WTC11 (cell line): ENCODE measurements at regions of chr4 and their contacts with region 1.

Region 1: GRCh38 chr4:1105662-1106061 is 7.7 kb downstream of the RNF212 start:
- DNase-seq: no peak
- ATAC-seq: no peak
- H3K4me3 Mint-ChIP-seq: no peak overlapping the region
- H3K27ac Mint-ChIP-seq: no peak overlapping the region
- H3K4me1 Mint-ChIP-seq: 0 out of 2 replicates have a peak, but pooled peaks cover 9% of the 10 kb centered on the region
- H3K27me3 Mint-ChIP-seq: peaks cover 2% of the 10 kb centered on the region; the same call in 1 of the 2 replicates
- CTCF ChIP-seq: no peak

Region 2: GRCh38 chr4:1092026-1092982 is 13.4 kb before region 1 on chr4:
- CTCF ChIA-PET with region 1: interaction called, 11 read pairs
- POLR2A ChIA-PET with region 1: no interaction called
- DNase-seq: peak; percentile 67
- ATAC-seq: peak; percentile 98
- H3K4me3 Mint-ChIP-seq: no peak overlapping the region
- H3K27ac Mint-ChIP-seq: no peak overlapping the region
- H3K4me1 Mint-ChIP-seq: no peaks in the 10 kb centered on the region
- H3K27me3 Mint-ChIP-seq: peaks cover 13% of the 10 kb centered on the region
- CTCF ChIP-seq: peak; percentile 22; the same call in 1 of the 2 replicates

Region 3: DNA sequence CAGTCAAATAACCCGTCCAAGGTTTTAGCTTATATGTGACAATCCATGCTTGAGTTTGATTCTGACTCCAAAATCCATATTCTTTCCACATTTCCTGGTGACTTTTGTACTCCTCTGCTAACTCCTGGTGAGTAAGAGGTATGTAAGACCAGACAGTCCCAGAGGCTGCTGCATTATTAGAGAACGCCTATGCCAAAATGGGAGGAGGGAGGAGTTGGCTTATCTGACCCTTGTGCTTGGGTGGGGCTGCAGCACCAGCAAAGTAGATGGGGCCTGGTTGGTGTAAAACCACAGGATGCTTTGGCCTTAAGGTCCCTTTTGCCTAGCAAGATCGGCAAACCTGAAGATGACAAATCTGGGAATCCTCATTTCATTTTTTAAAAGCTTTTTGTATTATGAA is 16.8 kb after region 1 on chr4:
- CTCF ChIA-PET with region 1: no interaction called
- POLR2A ChIA-PET with region 1: no interaction called
- DNase-seq: no peak
- ATAC-seq: no peak
- H3K4me3 Mint-ChIP-seq: no peak overlapping the region
- H3K27ac Mint-ChIP-seq: no peak overlapping the region
- H3K4me1 Mint-ChIP-seq: 0 out of 2 replicates have a peak, but pooled peaks cover 3% of the 10 kb centered on the region
- H3K27me3 Mint-ChIP-seq: peaks cover 18% of the 10 kb centered on the region
- CTCF ChIP-seq: no peak